MCF 10A (cell line): ENCODE measurements at regions of chr17 and their contacts with region 1.

Region 1: GRCh38 chr17:14069251-14070021 is at the start of gene COX10:
- DNase-seq: peak; percentile 92
- H3K4me3 Mint-ChIP-seq: peak within 1 kb of the TSS; percentile 95
- H3K27ac Mint-ChIP-seq: peak within 1 kb of the TSS; percentile 96
- H3K4me1 Mint-ChIP-seq: peaks cover 29% of the 10 kb centered on the region
- H3K27me3 Mint-ChIP-seq: no peaks in the 10 kb centered on the region
- CTCF ChIP-seq: no peak
- total RNA-seq, gene COX10: 16.4 and 21.0 TPM in 2 replicates

Region 2: DNA sequence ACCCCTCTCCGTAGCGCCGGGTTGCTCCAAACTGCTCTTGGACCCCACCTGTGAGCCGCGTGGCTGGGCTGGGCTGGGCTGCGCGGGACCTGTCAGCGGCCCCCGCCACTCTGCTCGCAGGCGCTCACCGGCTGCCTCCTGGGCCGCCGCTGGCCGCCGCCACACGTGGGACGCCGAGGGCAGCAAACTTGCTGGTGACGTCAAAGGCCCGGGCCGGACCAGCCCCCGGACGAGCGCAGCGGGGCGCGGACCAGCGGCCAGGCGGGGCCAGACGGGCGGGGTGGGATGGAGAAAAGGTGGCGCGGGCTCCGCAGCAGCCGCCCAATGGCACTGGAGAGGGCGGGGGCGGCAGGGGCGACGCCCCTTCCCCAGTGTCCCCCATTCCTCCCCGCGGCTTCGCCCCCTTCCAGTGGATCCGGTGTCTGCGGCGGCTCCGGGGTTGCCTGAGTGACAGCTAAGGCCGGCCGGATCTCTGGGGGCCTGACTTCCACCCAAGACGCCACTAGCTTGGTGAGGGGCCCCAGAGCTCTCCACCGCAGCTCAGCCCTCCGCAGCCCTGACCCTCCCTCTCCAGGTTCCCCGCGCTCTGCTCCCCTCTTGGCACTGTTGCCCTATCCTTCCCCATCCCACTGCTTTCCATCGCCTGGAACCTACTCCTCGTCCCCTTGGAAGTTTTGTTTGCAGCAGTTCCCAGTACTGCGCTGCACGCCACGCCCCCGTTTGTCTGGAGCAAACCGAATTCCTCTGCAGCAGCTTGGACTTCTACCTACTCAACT is 467.5 kb before region 1 on chr17 and contains the start of gene HS3ST3A1:
- CTCF ChIA-PET with region 1: interaction called, 4 read pairs
- POLR2A ChIA-PET with region 1: interaction called, 6 read pairs
- intact Hi-C with region 1: loop called (anchors 1 kb)
- DNase-seq: peak; percentile 78
- H3K4me3 Mint-ChIP-seq: peak within 1 kb of the TSS; percentile 88
- H3K27ac Mint-ChIP-seq: peak within 1 kb of the TSS; percentile 63
- H3K4me1 Mint-ChIP-seq: peaks cover 30% of the 10 kb centered on the region
- H3K27me3 Mint-ChIP-seq: no peaks in the 10 kb centered on the region
- CTCF ChIP-seq: no peak
- total RNA-seq, gene HS3ST3A1: 7.3 and 10.4 TPM in 2 replicates

Region 3: GRCh38 chr17:14052886-14053615 is 16.4 kb before region 1 on chr17:
- CTCF ChIA-PET with region 1: interaction called, 3 read pairs
- POLR2A ChIA-PET with region 1: interaction called, 31 read pairs
- intact Hi-C with region 1: no loop called
- DNase-seq: peak; percentile 60
- H3K4me3 Mint-ChIP-seq: peak overlapping the region; percentile 44
- H3K27ac Mint-ChIP-seq: peak overlapping the region; percentile 76
- H3K4me1 Mint-ChIP-seq: peaks cover 13% of the 10 kb centered on the region
- H3K27me3 Mint-ChIP-seq: no peaks in the 10 kb centered on the region
- CTCF ChIP-seq: no peak

Region 4: GRCh38 chr17:14118951-14119350 is 49.5 kb after region 1 on chr17:
- CTCF ChIA-PET with region 1: no interaction called
- POLR2A ChIA-PET with region 1: no interaction called
- intact Hi-C with region 1: no loop called
- DNase-seq: no peak
- H3K4me3 Mint-ChIP-seq: no peak overlapping the region
- H3K27ac Mint-ChIP-seq: no peak overlapping the region
- H3K4me1 Mint-ChIP-seq: peaks cover 16% of the 10 kb centered on the region
- H3K27me3 Mint-ChIP-seq: no peaks in the 10 kb centered on the region
- CTCF ChIP-seq: no peak

Region 5: DNA sequence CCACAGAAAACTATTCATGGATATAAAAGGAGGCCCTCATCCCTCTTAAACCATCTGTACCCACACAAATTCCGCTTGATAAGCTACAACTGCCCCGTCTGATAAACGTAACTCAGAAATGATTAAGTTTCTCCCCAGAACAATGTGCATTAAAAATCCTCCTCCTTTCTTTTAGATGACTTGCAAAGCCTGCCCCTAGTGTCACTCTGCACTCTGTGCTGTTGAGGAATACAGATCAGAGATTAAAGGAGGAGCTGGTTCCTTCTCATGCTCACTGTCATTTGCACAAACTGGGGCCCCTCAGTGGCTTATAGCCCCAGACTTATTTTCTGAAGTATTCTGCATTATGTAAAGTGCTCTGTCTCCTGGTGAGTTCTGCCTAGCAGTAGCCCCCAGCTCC is 134.0 kb after region 1 on chr17:
- CTCF ChIA-PET with region 1: no interaction called
- POLR2A ChIA-PET with region 1: interaction called, 3 read pairs
- intact Hi-C with region 1: loop called (anchors 10 kb)
- DNase-seq: no peak
- H3K4me3 Mint-ChIP-seq: no peak overlapping the region
- H3K27ac Mint-ChIP-seq: no peak overlapping the region
- H3K4me1 Mint-ChIP-seq: peaks cover 34% of the 10 kb centered on the region
- H3K27me3 Mint-ChIP-seq: no peaks in the 10 kb centered on the region
- CTCF ChIP-seq: no peak